GM10248 (cell line): ENCODE measurements at regions of chr16 and their contacts with region 1.

Region 1: DNA sequence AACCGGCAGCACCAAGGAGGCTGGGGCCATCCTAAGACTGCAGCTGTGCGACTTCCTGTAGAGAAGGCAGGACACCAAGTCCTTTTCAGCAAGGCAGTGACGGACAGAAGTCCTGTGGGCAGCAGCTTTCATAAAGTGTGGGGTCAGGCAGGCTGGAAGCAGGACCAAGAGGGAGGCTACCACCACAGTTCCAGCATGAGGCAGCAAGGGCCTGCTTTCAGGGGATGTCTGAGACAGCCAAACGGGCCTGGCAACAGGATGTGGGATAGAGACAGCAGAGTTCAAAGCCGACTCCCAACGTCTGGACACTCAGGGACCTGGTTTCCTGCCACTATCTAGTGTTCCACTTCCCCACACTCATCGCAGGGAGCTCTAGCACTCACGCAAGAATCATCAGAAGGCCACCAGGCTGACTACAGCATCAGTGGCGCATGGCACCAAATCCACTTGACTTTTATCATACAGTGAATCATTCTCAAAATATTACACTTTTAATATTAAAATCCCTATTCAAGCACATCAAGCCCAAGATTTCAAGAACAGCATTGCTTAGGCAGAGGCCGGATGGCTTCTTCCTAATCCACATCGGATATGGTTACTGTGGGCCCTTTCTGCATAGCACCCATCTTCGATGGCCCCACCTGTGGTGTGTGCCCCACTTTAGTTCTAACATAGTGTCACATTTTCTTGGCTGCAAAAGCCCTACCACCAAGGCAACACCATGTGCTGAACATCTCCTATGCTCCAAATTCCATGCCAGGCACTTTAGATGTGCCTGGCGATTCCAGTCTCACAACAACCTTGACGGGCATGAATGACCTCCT is 5.2 kb downstream of the USP7 start:
- DNase-seq: no peak
- CTCF ChIP-seq: no peak

Region 2: GRCh38 chr16:8788578-8789172 is 169.9 kb before region 1 on chr16:
- CTCF ChIA-PET with region 1: no interaction called
- POLR2A ChIA-PET with region 1: no interaction called
- DNase-seq: no peak
- CTCF ChIP-seq: no peak

Region 3: DNA sequence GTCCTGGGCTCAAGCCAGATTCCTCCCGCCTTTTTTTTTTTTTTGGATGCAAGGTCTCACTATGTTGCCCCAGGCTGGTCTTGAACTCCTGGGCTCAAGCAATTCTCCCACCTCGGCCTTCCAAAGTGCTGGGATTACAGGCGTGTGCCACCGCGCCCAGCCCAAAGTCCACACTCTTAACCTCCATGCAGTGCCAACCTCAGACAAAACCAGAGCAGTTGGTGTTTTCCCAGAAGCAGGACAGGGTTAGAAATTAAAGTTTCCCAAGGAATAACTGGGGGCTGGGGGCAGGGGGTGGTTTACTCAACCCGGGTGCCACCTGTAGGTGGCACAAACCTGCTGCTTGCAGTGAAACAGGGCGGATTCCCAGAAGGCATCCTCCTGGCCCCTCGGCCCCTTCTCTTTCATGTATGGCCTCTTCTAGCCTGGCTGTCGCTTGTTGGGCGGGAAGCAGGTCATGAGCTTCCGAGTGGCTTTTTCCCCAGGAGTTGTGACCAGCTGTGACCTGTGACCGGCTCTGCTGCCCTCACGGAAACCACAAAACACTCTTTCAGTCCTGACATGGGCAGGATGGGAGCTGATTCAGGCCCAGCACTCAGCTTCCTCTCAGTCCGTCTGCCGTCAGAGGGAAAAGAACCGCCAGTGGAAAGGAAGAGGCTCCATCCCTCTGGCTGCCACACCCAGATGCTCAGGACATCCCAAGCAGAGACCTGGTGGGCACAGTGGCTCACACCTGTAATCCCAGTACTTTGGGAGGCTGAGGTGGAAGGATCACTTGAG is 30.7 kb after region 1 on chr16:
- CTCF ChIA-PET with region 1: no interaction called
- POLR2A ChIA-PET with region 1: no interaction called
- DNase-seq: no peak
- CTCF ChIP-seq: no peak

Region 4: GRCh38 chr16:9602189-9602588 is 643.6 kb after region 1 on chr16:
- CTCF ChIA-PET with region 1: no interaction called
- POLR2A ChIA-PET with region 1: interaction called, 11 read pairs
- DNase-seq: no peak
- CTCF ChIP-seq: no peak